Heart left ventricle (tissue), 16 donors: ENCODE measurements at regions of chr15 and their contacts with region 1.

Region 1: GRCh38 chr15:84658080-84658787 is at the start of gene NMB:
- DNase-seq: peak; percentile 78 to 88 (median 83)
- ATAC-seq: peak; percentile 36 to 72 (median 66)
- H3K4me3 ChIP-seq: peak within 1 kb of the TSS; percentile 6 to 87 (median 70)
- H3K27ac ChIP-seq: peak within 1 kb of the TSS; percentile 16 to 90 (median 78)
- H3K4me1 ChIP-seq: peaks cover 0 to 40% (median 20%) of the 10 kb centered on the region in 12 donors
- H3K27me3 ChIP-seq: no peaks in the 10 kb centered on the region
- CTCF ChIP-seq: peak; percentile 32 to 84 (median 52)
- POLR2A ChIP-seq: peak in 1 of 2 donors; percentile 49
- total RNA-seq, gene NMB: 1.4 to 8.6 (median 2.8) TPM

Region 2: GRCh38 chr15:84600851-84601838 is 57.1 kb before region 1 on chr15 and contains the start of gene ZSCAN2:
- intact Hi-C with region 1: loop called in 4 of 10 experiments (anchors 1 to 5 kb)
- DNase-seq: peak; percentile 95 to 97 (median 96)
- ATAC-seq: peak; percentile 98 to 99 (median 99)
- H3K4me3 ChIP-seq: peak within 1 kb of the TSS; percentile 47 to 97 (median 90)
- H3K27ac ChIP-seq: peak within 1 kb of the TSS in 11 of 12 donors; percentile 45 to 83 (median 72)
- H3K4me1 ChIP-seq: peaks cover 0 to 46% (median 9%) of the 10 kb centered on the region in 12 donors
- H3K27me3 ChIP-seq: no peaks in the 10 kb centered on the region
- CTCF ChIP-seq: no peak
- POLR2A ChIP-seq: peak in 1 of 2 donors; percentile 56
- total RNA-seq, gene ZSCAN2: 4.6 to 10.6 (median 6.3) TPM

Region 3: GRCh38 chr15:84702961-84703482 is 44.8 kb after region 1 on chr15:
- intact Hi-C with region 1: loop called in 1 of 10 experiments (anchors 5 kb)
- DNase-seq: peak in 4 of 5 donors; percentile 69 to 73 (median 71)
- ATAC-seq: peak; percentile 76 to 94 (median 91)
- H3K4me3 ChIP-seq: no peak overlapping the region
- H3K27ac ChIP-seq: peak overlapping the region in 7 of 12 donors; percentile 28 to 50 (median 38)
- H3K4me1 ChIP-seq: peaks cover 3 to 60% (median 17%) of the 10 kb centered on the region in 12 donors
- H3K27me3 ChIP-seq: no peaks in the 10 kb centered on the region
- CTCF ChIP-seq: no peak
- POLR2A ChIP-seq: no peak

Region 4: DNA sequence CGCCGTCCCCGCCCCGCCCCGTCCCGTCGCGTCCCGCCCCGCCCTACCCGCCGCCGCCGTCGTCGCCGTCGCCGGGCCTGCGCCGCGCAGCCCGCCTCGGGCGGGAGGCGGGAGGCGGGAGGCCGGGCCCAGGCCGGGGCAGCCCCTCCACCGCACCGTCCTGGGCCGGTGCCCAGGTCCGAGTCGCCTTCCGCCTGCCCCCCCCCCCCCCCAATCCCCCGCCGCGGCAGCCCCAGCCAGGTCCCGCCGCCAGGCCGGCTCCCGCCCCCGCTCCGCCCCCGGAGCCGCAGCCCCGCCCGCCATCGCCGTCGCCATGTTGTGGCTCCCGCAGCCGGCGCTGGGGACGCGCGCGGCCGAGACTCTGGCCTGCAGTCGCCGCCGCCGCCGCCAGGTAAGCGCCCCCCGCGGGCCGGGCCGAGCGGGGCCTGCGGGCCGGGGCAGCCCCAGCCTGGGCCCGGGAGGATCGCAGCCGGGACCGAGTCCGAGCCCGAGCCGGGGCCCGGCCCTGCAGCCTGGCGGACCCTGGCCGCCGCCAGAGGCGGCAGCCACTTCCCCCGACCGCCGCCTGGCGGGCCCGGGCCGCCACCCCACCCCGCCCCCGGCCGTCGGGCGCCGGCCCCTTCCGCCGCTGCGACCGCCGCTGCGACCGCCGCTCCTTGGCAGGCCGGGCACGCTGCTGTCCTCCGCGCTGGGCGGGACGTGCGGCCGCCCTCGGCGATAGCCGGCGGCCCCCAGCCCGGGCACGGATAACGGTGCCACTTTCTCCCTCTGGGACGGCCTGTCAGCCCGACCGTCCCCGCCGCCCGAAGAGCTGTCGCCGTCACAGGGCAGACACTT is 90.3 kb after region 1 on chr15 and contains the start of gene ZNF592:
- intact Hi-C with region 1: loop called in 4 of 10 experiments (anchors 2 to 10 kb)
- DNase-seq: peak; percentile 89 to 93 (median 91)
- ATAC-seq: peak; percentile 72 to 88 (median 78)
- H3K4me3 ChIP-seq: peak within 1 kb of the TSS; percentile 64 to 97 (median 94)
- H3K27ac ChIP-seq: peak within 1 kb of the TSS; percentile 99 to 100 (median 100)
- H3K4me1 ChIP-seq: peaks cover 13 to 72% (median 52%) of the 10 kb centered on the region in 12 donors
- H3K27me3 ChIP-seq: no peaks in the 10 kb centered on the region
- CTCF ChIP-seq: peak in 5 of 12 donors; percentile 13 to 62 (median 35)
- POLR2A ChIP-seq: no peak
- total RNA-seq, gene ZNF592: 16.8 to 28.6 (median 21.4) TPM

Region 5: DNA sequence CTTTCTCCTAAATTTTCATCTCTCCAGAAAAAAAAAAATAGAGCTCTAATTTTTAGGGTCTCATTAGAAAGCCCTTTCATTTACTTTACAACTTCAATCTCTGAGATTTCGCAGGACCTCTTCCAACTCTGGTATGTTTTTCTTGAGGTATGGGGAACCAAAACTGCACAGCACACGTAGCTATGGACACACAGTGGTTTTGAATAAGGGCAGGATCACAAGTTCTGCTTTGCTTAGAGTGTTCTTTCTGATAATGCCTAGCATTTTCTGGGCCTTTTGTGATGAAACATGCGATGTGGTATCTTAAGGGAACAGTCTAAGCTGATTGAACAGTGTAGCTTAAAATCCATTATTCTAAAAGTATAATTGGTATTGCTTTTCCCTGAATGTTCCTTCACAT is 115.5 kb after region 1 on chr15:
- intact Hi-C with region 1: no loop called
- DNase-seq: no peak
- ATAC-seq: no peak
- H3K4me3 ChIP-seq: no peak overlapping the region
- H3K27ac ChIP-seq: peak overlapping the region in 1 of 12 donors; percentile 58
- H3K4me1 ChIP-seq: peaks cover 0 to 38% (median 16%) of the 10 kb centered on the region in 12 donors
- H3K27me3 ChIP-seq: no peaks in the 10 kb centered on the region
- CTCF ChIP-seq: no peak
- POLR2A ChIP-seq: no peak

Region 6: GRCh38 chr15:84826369-84826823 is 168.2 kb after region 1 on chr15:
- intact Hi-C with region 1: loop called in 4 of 10 experiments (anchors 5 to 10 kb)
- DNase-seq: peak in 3 of 5 donors; percentile 38 to 47 (median 46)
- ATAC-seq: peak; percentile 16 to 37 (median 24)
- H3K4me3 ChIP-seq: no peak overlapping the region
- H3K27ac ChIP-seq: peak overlapping the region in 11 of 12 donors; percentile 54 to 99 (median 96)
- H3K4me1 ChIP-seq: peaks cover 10 to 100% (median 94%) of the 10 kb centered on the region in 12 donors
- H3K27me3 ChIP-seq: no peaks in the 10 kb centered on the region
- CTCF ChIP-seq: peak in 10 of 12 donors; percentile 8 to 43 (median 30)
- POLR2A ChIP-seq: no peak